Activated naive CD4-positive, alpha-beta T cell treated with anti-CD3 and anti-CD28 coated beads for 36 hours (primary cell): ENCODE measurements at regions of chr4 and their contacts with region 1.

Region 1: GRCh38 chr4:36325499-36325898 is 44.1 kb downstream of the DTHD1 start:
- DNase-seq: peak; percentile 25
- H3K4me3 Mint-ChIP-seq: no peak overlapping the region
- H3K27ac Mint-ChIP-seq: peak overlapping the region; percentile 52
- H3K4me1 Mint-ChIP-seq: peaks cover 62% of the 10 kb centered on the region
- H3K27me3 Mint-ChIP-seq: no peaks in the 10 kb centered on the region

Region 2: GRCh38 chr4:36081185-36081584 is 244.3 kb before region 1 on chr4:
- CTCF ChIA-PET with region 1: no interaction called
- intact Hi-C with region 1: loop called (anchors 1 kb)
- DNase-seq: peak; percentile 48
- H3K4me3 Mint-ChIP-seq: no peak overlapping the region
- H3K27ac Mint-ChIP-seq: no peak overlapping the region
- H3K4me1 Mint-ChIP-seq: peaks cover 2% of the 10 kb centered on the region
- H3K27me3 Mint-ChIP-seq: no peaks in the 10 kb centered on the region

Region 3: DNA sequence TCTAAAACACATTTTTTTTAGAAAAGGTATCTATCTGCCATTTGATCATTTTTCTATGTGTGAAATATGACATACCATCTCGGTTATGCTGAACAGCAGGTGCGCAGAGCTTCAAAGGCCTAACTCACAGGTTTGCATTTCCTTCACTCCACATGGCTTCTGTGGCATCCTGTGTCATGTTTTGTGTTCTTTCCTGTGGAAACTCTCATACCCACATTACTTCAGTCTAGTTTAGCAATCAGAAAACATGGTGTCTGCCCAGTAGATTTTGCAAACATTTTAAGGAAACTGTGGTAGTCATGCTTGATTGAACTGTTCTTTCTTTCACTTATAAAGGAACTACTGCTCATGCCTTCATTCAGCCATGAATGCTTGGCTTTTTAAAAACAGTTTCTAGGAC is 69.9 kb before region 1 on chr4:
- CTCF ChIA-PET with region 1: no interaction called
- intact Hi-C with region 1: loop called (anchors 1 kb)
- DNase-seq: peak; percentile 81
- H3K4me3 Mint-ChIP-seq: peak overlapping the region; percentile 41
- H3K27ac Mint-ChIP-seq: peak overlapping the region; percentile 90
- H3K4me1 Mint-ChIP-seq: peaks cover 30% of the 10 kb centered on the region
- H3K27me3 Mint-ChIP-seq: no peaks in the 10 kb centered on the region

Region 4: GRCh38 chr4:36338973-36339372 is 13.5 kb after region 1 on chr4:
- CTCF ChIA-PET with region 1: no interaction called
- intact Hi-C with region 1: no loop called
- DNase-seq: no peak
- H3K4me3 Mint-ChIP-seq: no peak overlapping the region
- H3K27ac Mint-ChIP-seq: no peak overlapping the region
- H3K4me1 Mint-ChIP-seq: peaks cover 11% of the 10 kb centered on the region
- H3K27me3 Mint-ChIP-seq: no peaks in the 10 kb centered on the region

Region 5: DNA sequence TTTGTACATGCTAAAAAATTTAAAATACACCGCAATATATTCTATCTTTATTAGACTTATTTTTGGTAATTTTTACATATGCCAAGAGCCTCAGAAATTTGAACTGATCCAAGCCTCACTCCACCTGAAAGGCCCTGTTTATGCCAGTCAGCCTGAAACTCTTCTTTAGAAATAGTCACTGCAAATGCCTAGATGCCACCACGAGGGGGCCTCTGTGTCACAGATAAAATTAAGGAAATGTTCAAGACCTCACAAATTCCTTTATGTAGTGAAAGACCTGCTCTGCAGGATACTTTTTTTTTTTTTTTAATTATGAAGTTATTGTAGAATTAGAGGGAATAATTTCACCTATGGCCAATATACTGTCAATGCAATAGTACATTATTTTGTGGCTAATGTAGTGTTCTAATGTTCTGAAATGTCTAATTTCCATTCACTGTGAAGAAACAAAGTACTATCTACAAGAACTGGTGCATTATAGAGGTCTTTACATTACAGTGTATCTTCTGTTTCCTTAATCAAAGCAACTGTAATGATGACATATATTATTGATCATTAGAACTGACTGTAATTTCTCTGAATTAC is 25.7 kb after region 1 on chr4:
- CTCF ChIA-PET with region 1: interaction called, 3 read pairs
- intact Hi-C with region 1: loop called (anchors 1 kb)
- DNase-seq: peak; percentile 89
- H3K4me3 Mint-ChIP-seq: no peak overlapping the region
- H3K27ac Mint-ChIP-seq: no peak overlapping the region
- H3K4me1 Mint-ChIP-seq: peaks cover 15% of the 10 kb centered on the region
- H3K27me3 Mint-ChIP-seq: peaks cover 4% of the 10 kb centered on the region

Region 6: DNA sequence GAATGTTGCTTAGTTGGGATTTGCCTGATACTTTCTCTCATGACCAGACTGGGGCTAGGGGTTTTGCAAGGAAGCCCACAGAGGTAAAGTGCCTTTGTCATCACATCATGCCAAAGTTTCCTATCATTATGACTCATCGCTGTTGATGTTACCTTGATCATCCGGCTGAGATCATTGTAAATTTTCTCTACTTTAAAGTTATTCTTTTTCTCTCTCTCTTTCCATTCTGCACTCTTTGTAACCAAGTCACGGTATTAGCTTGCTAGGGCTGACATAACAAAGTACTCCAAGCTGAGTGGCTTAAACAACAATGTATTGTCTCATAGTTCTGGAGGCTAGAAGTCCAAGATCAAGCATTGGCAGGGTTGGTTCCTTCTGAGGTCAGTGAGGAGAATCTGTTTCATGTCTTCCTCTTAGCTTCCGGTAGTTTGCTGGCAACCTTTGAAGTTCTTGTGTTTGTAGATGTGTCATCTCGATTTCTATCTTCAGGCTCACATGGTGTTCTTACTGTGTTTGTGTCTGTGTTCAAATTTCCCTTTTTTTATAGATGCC is 68.9 kb after region 1 on chr4:
- CTCF ChIA-PET with region 1: interaction called, 8 read pairs
- intact Hi-C with region 1: loop called (anchors 1 kb)
- DNase-seq: peak; percentile 63
- H3K4me3 Mint-ChIP-seq: peak overlapping the region; percentile 55
- H3K27ac Mint-ChIP-seq: peak overlapping the region; percentile 97
- H3K4me1 Mint-ChIP-seq: peaks cover 21% of the 10 kb centered on the region
- H3K27me3 Mint-ChIP-seq: no peaks in the 10 kb centered on the region

Region 7: DNA sequence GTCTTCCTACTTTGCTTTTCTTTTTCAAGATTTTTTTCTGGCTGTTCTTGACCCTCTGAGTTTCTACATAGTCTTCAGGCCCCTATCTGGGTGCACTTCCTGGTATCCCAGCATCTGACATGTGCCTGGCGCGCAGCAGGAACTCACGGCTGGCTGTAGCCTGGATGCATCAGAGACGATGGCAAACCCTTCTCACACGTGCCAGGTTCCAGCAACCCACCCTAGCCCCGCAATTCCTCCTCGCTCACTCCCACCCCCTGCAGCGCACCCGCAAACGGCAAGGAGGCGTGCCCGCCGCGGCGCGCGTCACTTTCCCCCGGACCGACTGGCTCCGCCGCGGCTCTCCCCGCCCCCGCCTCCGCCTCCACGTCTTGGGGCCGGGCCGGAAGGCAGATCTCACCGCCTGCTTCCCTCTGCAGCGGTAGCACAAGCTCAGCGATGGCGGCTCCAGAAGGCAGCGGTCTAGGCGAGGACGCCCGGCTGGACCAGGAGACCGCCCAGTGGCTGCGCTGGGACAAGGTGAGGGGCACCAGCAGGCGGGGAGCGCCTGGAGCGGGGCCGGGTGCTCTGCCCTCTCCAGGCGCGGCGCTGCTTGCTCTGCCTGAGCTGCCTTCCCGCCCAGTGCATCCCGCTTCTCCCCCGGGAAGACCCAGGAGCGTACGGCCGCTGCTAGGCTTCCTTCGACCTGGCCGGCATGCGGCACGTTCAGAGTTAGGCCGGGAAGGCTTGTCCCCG is 1501.0 kb after region 1 on chr4 and contains the start of gene PGM2:
- CTCF ChIA-PET with region 1: no interaction called
- intact Hi-C with region 1: loop called (anchors 10 kb)
- DNase-seq: peak; percentile 92
- H3K4me3 Mint-ChIP-seq: peak within 1 kb of the TSS; percentile 100
- H3K27ac Mint-ChIP-seq: peak within 1 kb of the TSS; percentile 91
- H3K4me1 Mint-ChIP-seq: peaks cover 33% of the 10 kb centered on the region
- H3K27me3 Mint-ChIP-seq: no peaks in the 10 kb centered on the region
- total RNA-seq, gene PGM2: 53.7 to 53.9 TPM